Heart left ventricle (tissue), 16 donors: ENCODE measurements at regions of chr6 and their contacts with region 1.

Region 1: DNA sequence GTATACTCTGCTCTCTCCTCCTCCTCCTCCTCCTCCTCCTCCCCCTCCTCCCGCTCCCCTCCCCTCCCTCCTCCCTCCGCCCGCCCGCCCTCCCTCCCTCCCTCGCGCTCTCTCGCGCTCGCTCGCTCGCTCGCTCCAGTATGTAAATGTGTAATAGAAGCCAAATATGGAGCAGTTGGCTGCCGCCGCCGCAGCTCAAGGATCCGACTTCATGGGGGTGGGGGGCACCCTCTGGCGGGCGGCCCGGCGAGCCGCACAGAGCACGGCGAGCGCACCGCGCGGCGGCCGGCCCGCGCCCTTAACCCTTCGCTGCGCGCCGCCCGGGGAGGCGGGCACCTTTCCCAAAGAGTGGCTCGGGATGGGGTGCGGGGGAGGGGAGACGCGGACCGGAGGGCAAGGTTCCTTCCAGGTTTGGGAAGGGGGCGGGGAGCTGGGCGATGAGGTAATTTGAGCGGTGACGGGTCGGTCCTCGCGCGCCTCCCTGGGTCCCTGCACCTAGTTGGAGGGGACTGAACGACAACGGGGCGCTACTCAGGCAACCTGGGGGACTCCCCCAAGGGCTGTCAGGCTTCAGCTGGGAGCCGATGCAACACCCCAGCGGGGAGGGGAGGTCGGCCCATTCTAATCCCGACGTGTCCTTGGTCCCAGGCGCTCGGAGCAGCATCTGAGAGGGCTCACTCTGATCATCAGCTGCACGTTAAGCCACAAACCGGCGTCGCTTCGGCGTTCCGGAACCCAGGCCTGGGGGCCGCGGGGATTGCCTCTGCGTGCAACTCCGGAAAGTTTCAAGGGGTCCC is 409 bp upstream of the ATXN1 start:
- DNase-seq: peak; percentile 88 to 93 (median 91)
- ATAC-seq: peak; percentile 29 to 68 (median 62)
- H3K4me3 ChIP-seq: peak overlapping the region; percentile 67 to 99 (median 89)
- H3K27ac ChIP-seq: peak overlapping the region; percentile 93 to 100 (median 98)
- H3K4me1 ChIP-seq: peaks cover 0 to 65% (median 32%) of the 10 kb centered on the region in 12 donors
- H3K27me3 ChIP-seq: no peaks in the 10 kb centered on the region
- CTCF ChIP-seq: peak in 8 of 12 donors; percentile 21 to 52 (median 30)
- POLR2A ChIP-seq: no peak

Region 2: GRCh38 chr6:16238057-16238962 is 523.4 kb before region 1 on chr6 and contains the start of gene GMPR:
- intact Hi-C with region 1: loop called in 2 of 10 experiments (anchors 5 kb)
- DNase-seq: peak; percentile 82 to 91 (median 88)
- ATAC-seq: peak; percentile 53 to 84 (median 80)
- H3K4me3 ChIP-seq: peak within 1 kb of the TSS; percentile 50 to 88 (median 76)
- H3K27ac ChIP-seq: peak within 1 kb of the TSS; percentile 59 to 92 (median 86)
- H3K4me1 ChIP-seq: peaks cover 0 to 62% (median 28%) of the 10 kb centered on the region in 12 donors
- H3K27me3 ChIP-seq: no peaks in the 10 kb centered on the region
- CTCF ChIP-seq: peak in 4 of 12 donors; percentile 12 to 27 (median 20)
- POLR2A ChIP-seq: peak in 1 of 2 donors; percentile 58
- total RNA-seq, gene GMPR: 67.8 to 160 (median 115) TPM

Region 3: DNA sequence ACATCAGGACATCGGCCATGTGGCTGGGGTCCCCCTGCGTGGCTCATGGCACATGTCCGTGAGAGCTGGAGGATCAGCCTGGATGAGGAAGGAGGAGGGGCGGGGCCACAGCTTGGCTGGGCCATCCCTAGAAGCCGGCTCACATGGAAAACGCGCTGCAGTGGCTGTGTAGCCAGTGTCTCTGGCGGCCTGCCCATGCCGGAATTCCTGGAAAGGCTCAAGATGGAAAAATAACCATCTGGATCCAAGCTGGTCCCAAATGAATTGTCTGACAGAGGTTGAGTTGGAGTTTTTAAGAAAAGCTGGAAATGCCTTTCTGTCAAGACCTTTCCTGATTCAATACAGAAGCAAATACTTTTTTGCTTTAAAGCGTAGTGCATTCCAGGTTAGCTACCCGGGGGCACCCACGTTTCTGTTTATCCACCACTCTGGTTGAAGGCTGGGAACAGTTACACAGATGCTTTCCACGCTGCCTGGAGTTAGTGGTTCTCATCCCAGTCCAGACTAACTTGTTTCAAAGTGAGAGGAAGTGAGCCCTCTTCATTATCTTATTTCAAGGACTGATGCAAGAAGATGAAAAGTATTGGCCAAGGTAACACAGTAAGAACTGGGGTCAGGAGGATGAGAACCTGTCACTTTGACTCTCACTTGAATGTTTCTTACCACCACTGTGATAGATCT is 424.2 kb before region 1 on chr6:
- intact Hi-C with region 1: loop called in 9 of 10 experiments (anchors 1 to 10 kb)
- DNase-seq: peak; percentile 95 to 97 (median 96)
- ATAC-seq: peak; percentile 84 to 93 (median 90)
- H3K4me3 ChIP-seq: peak overlapping the region in 1 of 12 donors; percentile 19
- H3K27ac ChIP-seq: peak overlapping the region in 11 of 12 donors; percentile 9 to 62 (median 45)
- H3K4me1 ChIP-seq: peaks cover 13 to 79% (median 49%) of the 10 kb centered on the region in 12 donors
- H3K27me3 ChIP-seq: no peaks in the 10 kb centered on the region
- CTCF ChIP-seq: no peak
- POLR2A ChIP-seq: no peak

Region 4: DNA sequence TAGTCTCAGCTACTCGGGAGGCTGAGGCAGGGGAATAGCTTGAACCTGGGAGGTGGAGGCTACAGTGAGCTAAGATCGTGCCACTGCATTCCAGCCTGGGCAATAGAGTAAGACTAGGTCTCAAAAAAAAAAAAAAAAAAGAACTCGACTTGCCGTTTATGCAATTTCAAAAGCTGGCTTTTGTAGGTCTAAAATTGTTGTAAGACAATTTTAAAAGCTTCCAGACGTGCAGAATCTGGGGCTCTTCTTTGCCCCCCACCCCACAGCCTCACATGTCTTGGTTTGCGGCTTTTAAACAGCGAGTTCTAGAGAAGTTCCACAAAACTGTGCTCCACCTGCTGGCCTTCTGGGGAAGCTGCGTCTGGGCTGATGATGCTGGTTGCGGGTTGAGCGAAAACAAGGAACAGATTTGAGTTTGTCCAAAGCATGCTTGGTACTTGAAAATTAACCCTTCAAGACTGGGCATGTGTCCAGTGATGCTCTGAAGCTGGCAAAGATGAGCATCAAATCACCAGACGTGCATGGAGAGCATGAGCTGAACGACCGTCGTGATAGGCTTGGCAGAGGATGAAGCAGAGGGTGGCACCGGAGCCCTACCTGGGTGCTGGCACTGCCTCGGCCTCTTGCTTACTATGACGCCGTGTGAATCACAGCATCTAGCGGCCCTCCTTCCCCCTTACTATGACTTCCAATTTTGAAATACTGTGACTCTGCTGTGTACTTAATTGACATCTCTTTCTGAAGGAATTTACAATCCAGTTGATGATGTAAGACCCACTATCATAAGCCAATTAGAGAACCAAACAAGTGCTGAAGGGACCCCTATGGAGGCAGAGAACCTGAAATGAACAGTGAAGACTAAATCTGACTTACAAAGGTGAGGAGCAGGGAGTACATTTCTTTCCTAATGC is 351.9 kb before region 1 on chr6:
- intact Hi-C with region 1: loop called in 8 of 10 experiments (anchors 5 to 10 kb)
- DNase-seq: peak in 4 of 5 donors; percentile 48 to 68 (median 58)
- ATAC-seq: peak in 3 of 4 donors; percentile 53 to 70 (median 61)
- H3K4me3 ChIP-seq: no peak overlapping the region
- H3K27ac ChIP-seq: no peak overlapping the region
- H3K4me1 ChIP-seq: peaks cover 0 to 55% (median 17%) of the 10 kb centered on the region in 12 donors
- H3K27me3 ChIP-seq: no peaks in the 10 kb centered on the region
- CTCF ChIP-seq: peak; percentile 64 to 88 (median 80)
- POLR2A ChIP-seq: no peak

Region 5: GRCh38 chr6:16514249-16514648 is 247.4 kb before region 1 on chr6:
- intact Hi-C with region 1: loop called (anchors 2 to 5 kb)
- DNase-seq: no peak
- ATAC-seq: peak; percentile 27 to 57 (median 30)
- H3K4me3 ChIP-seq: no peak overlapping the region
- H3K27ac ChIP-seq: no peak overlapping the region
- H3K4me1 ChIP-seq: peaks cover 0 to 60% (median 35%) of the 10 kb centered on the region in 12 donors
- H3K27me3 ChIP-seq: no peaks in the 10 kb centered on the region
- CTCF ChIP-seq: peak in 11 of 12 donors; percentile 22 to 61 (median 36)
- POLR2A ChIP-seq: no peak

Region 6: DNA sequence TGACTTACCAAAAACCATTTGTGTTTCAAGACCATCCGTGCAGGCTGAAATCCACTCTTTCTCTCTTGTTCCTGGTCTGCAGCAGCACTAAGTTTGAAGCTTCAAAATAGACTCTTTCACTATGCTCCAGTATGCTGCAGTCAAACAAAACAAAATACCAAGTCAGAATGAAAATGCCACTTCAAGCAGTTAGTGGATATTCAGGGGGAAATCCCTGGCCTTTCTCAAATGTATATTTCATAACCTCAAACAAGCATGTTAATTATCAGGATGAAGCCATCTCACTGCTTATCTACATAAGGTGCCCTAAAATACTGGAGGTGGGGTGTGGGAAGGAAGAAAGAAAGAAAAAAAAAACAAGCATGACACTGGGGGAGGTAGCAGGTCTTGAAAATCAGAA is 103.9 kb before region 1 on chr6:
- intact Hi-C with region 1: loop called in 1 of 10 experiments (anchors 5 kb)
- DNase-seq: no peak
- ATAC-seq: no peak
- H3K4me3 ChIP-seq: no peak overlapping the region
- H3K27ac ChIP-seq: no peak overlapping the region
- H3K4me1 ChIP-seq: peaks cover 0 to 40% (median 11%) of the 10 kb centered on the region in 12 donors
- H3K27me3 ChIP-seq: no peaks in the 10 kb centered on the region
- CTCF ChIP-seq: no peak
- POLR2A ChIP-seq: no peak

Region 7: DNA sequence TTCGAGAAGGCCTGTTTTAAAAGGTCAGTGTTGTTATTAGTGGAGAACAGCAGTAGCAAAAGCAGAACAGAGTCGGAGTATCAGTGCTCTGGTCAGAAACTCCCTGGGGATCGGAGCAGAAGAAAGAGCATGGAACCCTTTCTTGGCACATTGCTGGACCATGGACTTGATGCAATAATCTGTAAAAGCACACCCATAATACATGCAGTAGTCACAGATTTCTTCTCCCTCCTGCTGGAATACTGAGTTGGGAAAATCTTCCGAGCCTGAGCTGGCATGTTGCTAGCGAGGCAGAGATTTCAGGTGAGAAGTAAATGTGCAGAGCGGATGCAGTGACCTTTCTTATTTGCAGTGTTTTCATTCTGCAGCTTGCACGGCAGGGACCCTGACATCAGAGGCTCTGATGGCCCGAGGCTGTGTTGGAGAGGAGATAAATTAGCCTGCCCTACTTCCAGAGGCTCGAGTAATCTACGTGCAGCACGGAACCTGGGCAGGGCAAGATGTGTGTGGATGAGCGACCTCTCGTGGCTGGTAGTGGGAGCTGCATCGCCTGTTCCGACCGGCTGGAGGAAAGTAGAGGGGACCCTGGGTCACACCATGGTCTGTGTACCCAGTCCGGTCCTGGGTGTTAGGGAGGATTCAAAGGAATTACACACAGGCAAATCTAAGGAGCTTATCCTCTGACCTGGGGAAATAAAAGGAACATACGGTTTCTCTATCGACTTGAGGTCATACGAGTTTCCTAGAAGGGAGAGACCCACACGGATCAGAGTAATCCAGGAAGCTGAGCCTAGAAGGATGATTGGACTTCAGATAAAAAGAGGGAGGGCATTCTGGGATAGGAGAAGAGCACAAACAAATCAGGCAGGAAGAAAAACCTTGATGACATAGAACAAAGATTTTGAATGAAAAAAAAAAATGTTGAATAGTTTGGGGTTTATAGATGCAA is 203.2 kb after region 1 on chr6:
- intact Hi-C with region 1: loop called in 6 of 10 experiments (anchors 2 to 5 kb)
- DNase-seq: peak; percentile 58 to 82 (median 70)
- ATAC-seq: peak; percentile 67 to 93 (median 90)
- H3K4me3 ChIP-seq: peak overlapping the region in 2 of 12 donors; percentile 21 to 22
- H3K27ac ChIP-seq: no peak overlapping the region
- H3K4me1 ChIP-seq: peaks cover 0 to 8% (median 4%) of the 10 kb centered on the region in 12 donors
- H3K27me3 ChIP-seq: peaks cover 0 to 4% (median 0%) of the 10 kb centered on the region in 9 donors
- CTCF ChIP-seq: peak; percentile 72 to 89 (median 84)
- POLR2A ChIP-seq: no peak